Naive thymus-derived CD4-positive, alpha-beta T cell (primary cell): ENCODE measurements at regions of chr1 and their contacts with region 1.

Region 1: GRCh38 chr1:28329395-28330153 is 734 bp downstream of the MED18 start:
- DNase-seq: peak in 2 of 9 donors; percentile 32 to 48
- ATAC-seq: peak; percentile 14
- H3K4me3 ChIP-seq: peak overlapping the region; percentile 59
- H3K4me3 Mint-ChIP-seq: peak overlapping the region; percentile 89 to 98 (median 92)
- H3K27ac ChIP-seq: peak overlapping the region; percentile 86
- H3K27ac Mint-ChIP-seq: peak overlapping the region; percentile 92 to 100 (median 98)
- H3K4me1 ChIP-seq: peaks cover 13 to 14% of the 10 kb centered on the region in 2 donors
- H3K4me1 Mint-ChIP-seq: peaks cover 20 to 40% (median 39%) of the 10 kb centered on the region in 7 donors
- H3K27me3 ChIP-seq: no peaks in the 10 kb centered on the region
- H3K27me3 Mint-ChIP-seq: peaks cover 0 to 3% (median 0%) of the 10 kb centered on the region in 5 donors

Region 2: DNA sequence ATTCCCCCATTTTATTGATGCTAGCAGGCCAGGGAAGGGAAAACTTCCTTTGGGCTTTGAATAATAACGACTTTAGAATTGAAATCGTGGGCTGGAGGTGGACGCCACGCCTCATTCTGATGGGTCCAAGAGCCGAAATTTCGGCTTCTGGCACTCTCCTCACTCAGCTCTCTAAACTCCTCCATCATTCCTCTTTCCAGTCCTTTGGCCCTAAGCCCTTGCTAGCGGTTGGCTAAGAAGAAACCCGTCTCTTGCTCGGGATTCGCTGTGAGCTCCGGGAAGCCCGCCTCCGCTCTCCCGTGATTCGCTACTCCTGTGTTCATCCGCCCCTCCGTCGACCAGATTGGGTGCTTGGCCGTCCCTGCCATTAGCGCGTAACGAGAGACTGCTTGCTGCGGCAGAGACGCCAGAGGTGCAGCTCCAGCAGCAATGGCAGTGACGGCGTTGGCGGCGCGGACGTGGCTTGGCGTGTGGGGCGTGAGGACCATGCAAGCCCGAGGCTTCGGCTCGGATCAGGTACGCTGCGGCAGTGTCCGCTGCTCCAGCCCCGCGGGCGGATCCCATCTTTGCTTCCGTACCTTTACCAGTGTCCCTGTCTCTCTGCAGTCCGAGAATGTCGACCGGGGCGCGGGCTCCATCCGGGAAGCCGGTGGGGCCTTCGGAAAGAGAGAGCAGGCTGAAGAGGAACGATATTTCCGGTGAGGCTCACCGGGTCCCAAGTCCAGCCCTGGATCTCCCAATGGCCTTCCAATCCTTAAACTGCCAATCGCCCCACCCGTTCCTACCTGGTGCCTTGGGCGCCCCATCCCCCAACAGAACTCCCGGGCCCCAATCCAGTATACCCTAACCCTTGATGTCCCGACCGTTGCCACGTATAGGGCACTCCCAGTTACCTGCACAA is 93.6 kb before region 1 on chr1 and contains the start of gene ATP5IF1:
- CTCF ChIA-PET with region 1: no interaction called
- POLR2A ChIA-PET with region 1: interaction called, 13 read pairs
- intact Hi-C with region 1: loop called in 1 of 2 experiments (anchors 2 kb)
- DNase-seq: peak; percentile 78 to 96 (median 94)
- ATAC-seq: peak; percentile 97
- H3K4me3 ChIP-seq: peak within 1 kb of the TSS; percentile 95
- H3K4me3 Mint-ChIP-seq: peak within 1 kb of the TSS in 2 of 10 donors; percentile 5 to 48
- H3K27ac ChIP-seq: peak within 1 kb of the TSS; percentile 87
- H3K27ac Mint-ChIP-seq: no peak within 1 kb of the TSS
- H3K4me1 ChIP-seq: peaks cover 26 to 34% of the 10 kb centered on the region in 2 donors
- H3K4me1 Mint-ChIP-seq: peaks cover 7 to 33% (median 20%) of the 10 kb centered on the region in 7 donors
- H3K27me3 ChIP-seq: no peaks in the 10 kb centered on the region
- H3K27me3 Mint-ChIP-seq: no peaks in the 10 kb centered on the region
- total RNA-seq, gene ATP5IF1: 68.2 to 158 (median 104) TPM

Region 3: DNA sequence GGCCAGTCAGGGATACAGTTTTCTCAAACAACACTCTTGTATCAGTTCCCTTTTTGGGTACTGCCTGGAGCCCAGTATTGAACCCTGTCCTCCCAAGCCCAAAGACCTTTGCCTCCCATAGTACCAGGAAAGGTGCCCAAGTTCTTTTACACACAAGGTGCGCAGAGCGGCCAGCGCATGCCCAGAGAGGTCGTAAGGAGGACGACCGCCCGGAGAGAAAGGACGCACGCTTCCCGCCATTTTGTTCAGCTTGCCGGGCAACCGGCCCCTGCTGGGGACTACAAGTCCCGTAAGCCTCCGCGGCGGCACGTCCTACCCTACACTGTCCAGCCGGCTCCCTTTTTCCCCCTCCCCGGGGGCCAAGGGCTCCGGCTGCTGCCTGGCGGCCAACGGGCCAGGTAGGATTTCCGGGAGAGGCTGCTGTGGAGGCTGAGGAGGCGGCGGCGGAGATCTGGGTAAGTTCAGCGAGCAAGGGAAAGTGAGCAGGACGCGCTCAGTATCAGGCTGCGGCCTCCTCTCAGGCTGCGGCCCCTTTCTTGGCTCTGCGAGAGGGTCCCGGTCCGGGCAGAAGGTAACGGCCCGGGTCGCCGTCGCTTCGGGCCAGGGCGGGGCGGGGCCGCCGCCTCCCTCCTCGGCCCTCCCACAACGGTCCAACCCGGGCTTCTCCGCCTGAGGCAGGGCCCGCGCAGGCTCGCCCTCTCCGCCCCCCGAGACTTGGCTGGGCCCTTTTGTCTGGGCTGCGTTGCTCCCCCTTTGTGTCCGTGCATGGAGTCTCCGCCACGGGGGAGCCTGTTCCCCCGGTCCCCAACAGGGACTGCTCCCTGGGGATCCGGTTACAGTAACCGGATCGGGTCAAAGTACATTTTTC is 40.0 kb after region 1 on chr1 and contains the start of gene PHACTR4:
- CTCF ChIA-PET with region 1: no interaction called
- POLR2A ChIA-PET with region 1: interaction called, 4 read pairs
- intact Hi-C with region 1: loop called (anchors 1 kb)
- DNase-seq: peak; percentile 54 to 81 (median 66)
- ATAC-seq: peak; percentile 96
- H3K4me3 ChIP-seq: peak within 1 kb of the TSS; percentile 74
- H3K4me3 Mint-ChIP-seq: peak within 1 kb of the TSS; percentile 82 to 98 (median 94)
- H3K27ac ChIP-seq: peak within 1 kb of the TSS; percentile 79
- H3K27ac Mint-ChIP-seq: peak within 1 kb of the TSS; percentile 88 to 99 (median 91)
- H3K4me1 ChIP-seq: peaks cover 10 to 11% of the 10 kb centered on the region in 2 donors
- H3K4me1 Mint-ChIP-seq: peaks cover 11 to 40% (median 35%) of the 10 kb centered on the region in 7 donors
- H3K27me3 ChIP-seq: no peaks in the 10 kb centered on the region
- H3K27me3 Mint-ChIP-seq: peaks cover 0 to 2% (median 0%) of the 10 kb centered on the region in 5 donors
- total RNA-seq, gene PHACTR4: 19.8 to 29.0 (median 25.7) TPM